Gastrocnemius medialis (tissue), 4 donors: ENCODE measurements at regions of chr5 and their contacts with region 1.

Region 1: DNA sequence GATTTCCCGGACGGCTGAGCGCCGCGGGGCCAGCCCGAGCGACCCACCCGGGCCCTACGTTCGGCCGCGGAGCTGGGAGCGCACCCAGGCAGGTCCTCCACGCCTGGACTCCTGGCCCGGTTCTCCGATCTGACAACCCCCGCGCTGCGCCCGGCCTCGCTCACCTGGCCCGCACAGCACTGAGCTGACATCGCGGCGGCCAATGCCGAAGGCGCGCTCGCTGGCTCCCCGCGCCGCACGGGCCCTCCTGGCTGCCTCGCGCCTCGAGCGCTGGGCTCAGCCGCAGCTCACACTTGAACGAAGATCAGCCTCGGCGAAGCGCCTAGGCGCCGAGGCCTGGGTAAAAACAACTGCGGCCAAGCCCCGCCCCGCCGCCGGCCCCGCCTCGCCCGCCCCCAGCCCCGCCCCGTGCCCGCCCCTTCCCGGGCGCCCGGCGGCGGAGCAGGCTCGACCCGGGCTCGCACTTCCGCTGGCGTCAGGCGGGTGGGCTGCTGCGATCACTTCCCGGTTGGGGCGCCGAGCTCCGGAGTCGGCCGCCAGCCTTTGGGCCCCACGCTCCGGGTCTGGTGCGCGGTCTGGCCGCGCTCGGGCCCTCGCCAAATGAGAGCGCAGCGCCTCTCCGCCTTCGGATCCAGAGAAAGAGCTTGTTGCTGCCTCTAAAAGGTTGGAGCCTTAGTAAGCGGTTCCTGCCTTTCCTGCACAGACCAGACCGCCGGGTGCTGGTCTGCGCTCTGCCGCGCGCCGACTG is at the start of gene SERINC5:
- DNase-seq: peak; percentile 60 to 71
- ATAC-seq: peak; percentile 79 to 81
- H3K4me3 ChIP-seq: peak within 1 kb of the TSS; percentile 76 to 95 (median 82)
- H3K27ac ChIP-seq: peak within 1 kb of the TSS; percentile 87 to 94 (median 91)
- H3K4me1 ChIP-seq: peaks cover 9 to 15% of the 10 kb centered on the region in 2 donors
- H3K27me3 ChIP-seq: no peaks in the 10 kb centered on the region
- CTCF ChIP-seq: no peak
- POLR2A ChIP-seq: peak; percentile 87
- total RNA-seq, gene SERINC5: 1.4 to 5.3 (median 3.0) TPM

Region 2: DNA sequence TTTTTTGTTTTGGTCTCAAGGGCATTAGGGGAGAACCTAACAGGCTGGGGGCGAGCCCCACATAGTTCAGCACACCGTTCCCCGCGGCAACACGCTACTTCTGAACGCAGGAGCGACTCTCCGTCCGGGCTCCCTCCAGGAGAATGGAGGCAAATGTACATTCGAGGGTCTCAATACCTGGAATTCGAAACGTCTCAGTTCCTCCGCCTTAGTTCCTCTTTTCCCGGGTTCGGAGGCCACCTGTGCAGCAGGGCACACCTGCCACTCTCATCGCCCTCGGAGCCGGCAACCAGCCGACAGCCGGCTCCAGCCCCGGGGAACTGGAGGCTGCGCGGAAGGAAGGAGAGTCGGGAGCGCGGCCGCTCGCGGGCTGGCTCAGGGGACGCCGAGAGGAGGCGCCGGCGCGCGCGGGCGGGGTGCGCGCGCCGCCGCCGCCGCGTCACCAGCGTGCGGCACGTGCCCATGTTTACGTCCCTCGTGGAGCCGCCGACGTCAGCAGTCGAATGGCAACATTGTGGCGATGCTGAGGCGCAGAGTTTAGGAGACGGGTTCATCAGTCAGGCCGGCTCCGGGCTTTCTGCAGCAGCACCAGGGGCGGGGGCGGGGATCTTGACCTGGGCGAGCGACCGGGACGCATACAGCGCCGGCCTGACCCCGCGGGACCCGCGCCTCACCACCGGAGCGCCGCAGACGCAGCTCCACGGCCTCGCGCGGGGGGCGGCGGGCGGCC is 1020.1 kb before region 1 on chr5 and contains the start of gene JMY:
- in situ Hi-C with region 1: no loop called
- intact Hi-C with region 1: loop called (anchors 5 kb)
- DNase-seq: peak; percentile 78 to 81
- ATAC-seq: peak; percentile 83 to 86
- H3K4me3 ChIP-seq: peak within 1 kb of the TSS; percentile 70 to 96 (median 86)
- H3K27ac ChIP-seq: peak within 1 kb of the TSS; percentile 85 to 96 (median 95)
- H3K4me1 ChIP-seq: peaks cover 31 to 33% of the 10 kb centered on the region in 2 donors
- H3K27me3 ChIP-seq: no peaks in the 10 kb centered on the region
- CTCF ChIP-seq: peak in 1 of 5 experiments; percentile 37
- POLR2A ChIP-seq: peak; percentile 92 to 98
- total RNA-seq, gene JMY: 11.4 to 26.7 (median 16.8) TPM

Region 3: DNA sequence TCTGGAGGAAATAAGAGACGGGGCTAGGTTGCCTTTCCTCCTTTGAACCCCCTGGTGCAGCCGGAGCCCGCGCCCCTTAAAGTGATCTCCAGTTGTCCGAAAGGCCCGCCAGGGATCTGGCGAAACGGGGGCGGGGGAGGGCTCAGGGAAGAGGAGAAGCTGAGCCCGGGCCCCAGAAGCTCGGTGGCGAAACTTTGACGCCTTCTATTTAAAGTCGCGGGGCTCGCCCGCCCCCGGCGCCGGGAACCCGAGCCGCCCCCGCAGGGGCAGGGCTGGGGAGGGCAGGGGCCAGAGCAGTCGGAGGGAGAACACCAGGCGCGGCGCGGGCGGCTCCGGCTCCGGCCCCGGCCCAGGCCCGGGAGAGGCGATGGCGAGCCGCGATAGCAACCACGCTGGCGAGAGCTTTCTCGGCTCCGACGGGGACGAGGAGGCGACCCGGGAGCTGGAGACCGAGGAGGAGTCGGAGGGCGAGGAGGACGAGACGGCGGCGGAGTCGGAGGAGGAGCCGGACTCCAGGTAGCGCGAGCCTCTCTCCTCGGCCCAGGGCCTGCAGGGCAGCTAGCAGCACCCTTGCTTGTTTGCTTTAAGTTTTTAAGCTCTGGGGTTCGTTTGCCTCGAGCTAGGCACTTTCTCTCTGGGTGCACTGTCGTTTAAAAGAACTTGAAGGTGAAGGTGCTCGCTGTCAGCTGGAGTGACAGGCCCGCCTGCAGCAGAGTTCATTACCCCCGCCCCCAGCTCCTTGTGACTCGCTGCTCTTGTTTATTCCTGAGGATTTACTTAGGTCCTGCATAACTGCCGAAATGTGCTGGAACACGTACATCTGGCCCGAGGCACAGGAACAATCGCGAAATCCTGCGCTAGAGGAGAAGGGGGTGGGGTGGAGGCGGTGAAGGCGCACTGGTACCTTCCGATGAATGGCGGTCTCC is 566.1 kb before region 1 on chr5 and contains the start of gene CMYA5:
- in situ Hi-C with region 1: no loop called
- intact Hi-C with region 1: loop called (anchors 10 kb)
- DNase-seq: peak; percentile 94 to 98
- ATAC-seq: peak; percentile 75 to 79
- H3K4me3 ChIP-seq: peak within 1 kb of the TSS; percentile 75 to 83 (median 81)
- H3K27ac ChIP-seq: peak within 1 kb of the TSS; percentile 99
- H3K4me1 ChIP-seq: peaks cover 10 to 11% of the 10 kb centered on the region in 2 donors
- H3K27me3 ChIP-seq: no peaks in the 10 kb centered on the region
- CTCF ChIP-seq: no peak
- POLR2A ChIP-seq: peak; percentile 95
- total RNA-seq, gene CMYA5: 3,049 to 3,867 (median 3,338) TPM

Region 4: GRCh38 chr5:80191991-80192398 is 63.9 kb before region 1 on chr5:
- in situ Hi-C with region 1: no loop called
- intact Hi-C with region 1: loop called (anchors 2 kb)
- DNase-seq: peak in 1 of 2 donors; percentile 42
- ATAC-seq: peak; percentile 50 to 63
- H3K4me3 ChIP-seq: peak overlapping the region in 3 of 4 donors; percentile 26 to 30 (median 30)
- H3K27ac ChIP-seq: peak overlapping the region; percentile 59 to 85 (median 77)
- H3K4me1 ChIP-seq: peaks cover 44 to 50% of the 10 kb centered on the region in 2 donors
- H3K27me3 ChIP-seq: no peaks in the 10 kb centered on the region
- CTCF ChIP-seq: no peak
- POLR2A ChIP-seq: no peak

Region 5: DNA sequence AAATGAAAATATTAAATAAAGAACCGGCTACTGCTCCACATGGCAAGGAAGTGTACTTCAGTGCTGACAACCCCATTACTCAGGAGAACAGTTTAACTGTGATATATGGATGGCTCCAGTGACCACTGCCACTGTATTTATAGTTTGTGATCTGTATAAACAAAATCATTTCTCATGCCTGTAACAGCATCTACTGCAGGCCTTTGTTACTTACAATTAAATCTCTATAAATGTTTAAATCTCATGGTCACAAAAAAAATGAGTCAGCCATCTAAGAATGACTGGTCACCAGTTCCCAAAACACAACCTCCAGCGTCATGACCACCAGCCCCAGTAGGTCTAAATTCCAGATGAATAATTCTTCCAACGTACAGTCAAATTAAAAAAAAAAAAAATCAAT is 24.7 kb before region 1 on chr5:
- in situ Hi-C with region 1: no loop called
- intact Hi-C with region 1: no loop called
- DNase-seq: no peak
- ATAC-seq: no peak
- H3K4me3 ChIP-seq: no peak overlapping the region
- H3K27ac ChIP-seq: no peak overlapping the region
- H3K4me1 ChIP-seq: peaks cover 0 to 7% of the 10 kb centered on the region in 2 donors
- H3K27me3 ChIP-seq: no peaks in the 10 kb centered on the region
- CTCF ChIP-seq: no peak
- POLR2A ChIP-seq: no peak

Region 6: GRCh38 chr5:80407735-80408482 is 152.0 kb after region 1 on chr5 and contains the start of gene ZFYVE16:
- in situ Hi-C with region 1: loop called in 1 of 4 experiments (anchors 10 kb)
- intact Hi-C with region 1: loop called (anchors 5 kb)
- DNase-seq: peak; percentile 95 to 97
- ATAC-seq: peak; percentile 94 to 95
- H3K4me3 ChIP-seq: peak within 1 kb of the TSS; percentile 88 to 98 (median 93)
- H3K27ac ChIP-seq: peak within 1 kb of the TSS; percentile 94 to 99 (median 96)
- H3K4me1 ChIP-seq: peaks cover 18 to 22% of the 10 kb centered on the region in 2 donors
- H3K27me3 ChIP-seq: no peaks in the 10 kb centered on the region
- CTCF ChIP-seq: peak; percentile 48 to 74 (median 60)
- POLR2A ChIP-seq: peak; percentile 87 to 93
- total RNA-seq, gene ZFYVE16: 9.7 to 19.1 (median 12.4) TPM

Region 7: GRCh38 chr5:81035522-81035921 is 779.6 kb after region 1 on chr5:
- in situ Hi-C with region 1: no loop called
- intact Hi-C with region 1: no loop called
- DNase-seq: no peak
- ATAC-seq: no peak
- H3K4me3 ChIP-seq: no peak overlapping the region
- H3K27ac ChIP-seq: no peak overlapping the region
- H3K4me1 ChIP-seq: no peaks in the 10 kb centered on the region
- H3K27me3 ChIP-seq: no peaks in the 10 kb centered on the region
- CTCF ChIP-seq: no peak
- POLR2A ChIP-seq: no peak